ENCODE measurements at regions of chrX and their contacts with region 1.

Region 1: GRCh38 chrX:46903458-46904242 is 8.6 kb upstream of the JADE3 start:
- DNase-seq: peak; percentile 40 to 54 (median 49)
- H3K4me3 ChIP-seq: no peak overlapping the region
- H3K4me3 Mint-ChIP-seq: peak overlapping the region in 7 of 8 donors; percentile 15 to 74 (median 54)
- H3K27ac ChIP-seq: no peak overlapping the region
- H3K27ac Mint-ChIP-seq: peak overlapping the region in 1 of 7 donors; percentile 53
- H3K4me1 ChIP-seq: peaks cover 3% of the 10 kb centered on the region
- H3K4me1 Mint-ChIP-seq: no peaks in the 10 kb centered on the region
- H3K27me3 ChIP-seq: no peaks in the 10 kb centered on the region
- H3K27me3 Mint-ChIP-seq: no peaks in the 10 kb centered on the region

Region 2: GRCh38 chrX:45007598-45007997 is 1896.1 kb before region 1 on chrX:
- CTCF ChIA-PET with region 1: no interaction called
- POLR2A ChIA-PET with region 1: no interaction called
- intact Hi-C with region 1: no loop called
- DNase-seq: no peak
- H3K4me3 ChIP-seq: no peak overlapping the region
- H3K4me3 Mint-ChIP-seq: peak overlapping the region in 4 of 8 donors; percentile 47 to 54 (median 50)
- H3K27ac ChIP-seq: no peak overlapping the region
- H3K27ac Mint-ChIP-seq: peak overlapping the region in 3 of 7 donors; percentile 30 to 62 (median 53)
- H3K4me1 ChIP-seq: peaks cover 7% of the 10 kb centered on the region
- H3K4me1 Mint-ChIP-seq: peaks cover 18 to 71% (median 38%) of the 10 kb centered on the region in 4 donors
- H3K27me3 ChIP-seq: no peaks in the 10 kb centered on the region
- H3K27me3 Mint-ChIP-seq: no peaks in the 10 kb centered on the region

Region 3: DNA sequence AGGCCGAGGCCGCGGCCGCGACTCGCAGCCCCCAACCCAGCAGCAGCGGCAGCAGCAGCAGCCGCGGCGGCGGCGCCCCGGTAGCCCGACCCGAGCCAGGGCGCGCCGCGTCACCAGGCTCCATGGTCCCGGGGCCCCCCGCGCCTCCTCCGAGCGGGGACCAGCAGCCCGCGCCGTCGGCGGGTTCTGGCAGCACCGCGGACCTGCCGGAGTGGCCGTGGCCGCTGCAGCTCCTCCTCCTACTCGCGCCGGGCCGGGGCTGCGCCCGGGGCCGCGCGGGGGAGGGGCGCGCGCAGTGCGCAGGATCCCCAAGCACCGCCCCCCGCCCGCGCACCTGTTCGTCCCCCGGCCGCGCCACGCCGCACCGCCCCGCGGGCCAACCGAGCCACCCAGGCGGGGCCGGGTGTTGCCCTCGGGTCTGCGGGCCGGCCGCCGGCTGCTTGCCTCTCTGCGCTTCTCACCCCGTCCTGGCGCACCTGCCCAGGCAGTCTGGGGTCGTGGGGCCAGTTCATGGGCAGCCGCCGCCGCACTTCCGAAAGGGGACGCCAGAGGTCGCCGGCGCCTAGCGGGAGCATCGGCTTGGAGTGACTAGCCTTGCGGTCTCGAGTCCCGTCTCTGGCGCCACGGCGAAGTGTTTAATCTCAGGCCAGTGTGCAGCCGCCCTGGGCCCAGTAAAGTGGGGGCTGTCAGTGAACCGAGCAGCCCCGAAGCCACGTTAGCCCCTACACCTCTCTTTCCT is 144.6 kb before region 1 on chrX and contains the start of gene SLC9A7:
- CTCF ChIA-PET with region 1: no interaction called
- POLR2A ChIA-PET with region 1: no interaction called
- intact Hi-C with region 1: loop called (anchors 5 kb)
- DNase-seq: peak; percentile 71 to 80 (median 74)
- H3K4me3 ChIP-seq: peak within 1 kb of the TSS; percentile 17 to 56
- H3K4me3 Mint-ChIP-seq: peak within 1 kb of the TSS; percentile 84 to 93 (median 92)
- H3K27ac ChIP-seq: no peak within 1 kb of the TSS
- H3K27ac Mint-ChIP-seq: peak within 1 kb of the TSS; percentile 57 to 94 (median 78)
- H3K4me1 ChIP-seq: peaks cover 6% of the 10 kb centered on the region
- H3K4me1 Mint-ChIP-seq: peaks cover 5 to 21% (median 11%) of the 10 kb centered on the region in 4 donors
- H3K27me3 ChIP-seq: no peaks in the 10 kb centered on the region
- H3K27me3 Mint-ChIP-seq: no peaks in the 10 kb centered on the region
- total RNA-seq, gene SLC9A7: 2.8 to 3.5 TPM

Region 4: DNA sequence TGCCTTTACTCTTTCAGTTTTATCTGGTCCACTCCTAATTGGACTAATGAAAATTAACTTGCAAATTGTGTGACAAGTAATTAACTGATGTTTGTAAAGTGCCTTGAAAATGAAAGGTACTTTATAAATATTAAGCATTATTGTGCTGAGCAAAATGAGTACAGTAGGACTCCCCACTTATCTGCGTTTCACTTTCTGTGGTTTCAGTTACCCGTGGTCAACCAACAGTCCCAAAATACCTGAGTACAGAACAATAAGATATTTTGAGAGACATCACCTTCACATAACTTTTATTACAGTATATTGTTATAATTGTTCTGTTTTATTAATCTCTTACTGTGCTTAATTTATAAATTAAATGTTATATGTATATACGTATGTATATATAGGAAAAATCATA is 18.9 kb before region 1 on chrX:
- CTCF ChIA-PET with region 1: no interaction called
- POLR2A ChIA-PET with region 1: no interaction called
- intact Hi-C with region 1: no loop called
- DNase-seq: no peak
- H3K4me3 ChIP-seq: no peak overlapping the region
- H3K4me3 Mint-ChIP-seq: no peak overlapping the region
- H3K27ac ChIP-seq: no peak overlapping the region
- H3K27ac Mint-ChIP-seq: no peak overlapping the region
- H3K4me1 ChIP-seq: no peaks in the 10 kb centered on the region
- H3K4me1 Mint-ChIP-seq: no peaks in the 10 kb centered on the region
- H3K27me3 ChIP-seq: no peaks in the 10 kb centered on the region
- H3K27me3 Mint-ChIP-seq: no peaks in the 10 kb centered on the region

Region 5: DNA sequence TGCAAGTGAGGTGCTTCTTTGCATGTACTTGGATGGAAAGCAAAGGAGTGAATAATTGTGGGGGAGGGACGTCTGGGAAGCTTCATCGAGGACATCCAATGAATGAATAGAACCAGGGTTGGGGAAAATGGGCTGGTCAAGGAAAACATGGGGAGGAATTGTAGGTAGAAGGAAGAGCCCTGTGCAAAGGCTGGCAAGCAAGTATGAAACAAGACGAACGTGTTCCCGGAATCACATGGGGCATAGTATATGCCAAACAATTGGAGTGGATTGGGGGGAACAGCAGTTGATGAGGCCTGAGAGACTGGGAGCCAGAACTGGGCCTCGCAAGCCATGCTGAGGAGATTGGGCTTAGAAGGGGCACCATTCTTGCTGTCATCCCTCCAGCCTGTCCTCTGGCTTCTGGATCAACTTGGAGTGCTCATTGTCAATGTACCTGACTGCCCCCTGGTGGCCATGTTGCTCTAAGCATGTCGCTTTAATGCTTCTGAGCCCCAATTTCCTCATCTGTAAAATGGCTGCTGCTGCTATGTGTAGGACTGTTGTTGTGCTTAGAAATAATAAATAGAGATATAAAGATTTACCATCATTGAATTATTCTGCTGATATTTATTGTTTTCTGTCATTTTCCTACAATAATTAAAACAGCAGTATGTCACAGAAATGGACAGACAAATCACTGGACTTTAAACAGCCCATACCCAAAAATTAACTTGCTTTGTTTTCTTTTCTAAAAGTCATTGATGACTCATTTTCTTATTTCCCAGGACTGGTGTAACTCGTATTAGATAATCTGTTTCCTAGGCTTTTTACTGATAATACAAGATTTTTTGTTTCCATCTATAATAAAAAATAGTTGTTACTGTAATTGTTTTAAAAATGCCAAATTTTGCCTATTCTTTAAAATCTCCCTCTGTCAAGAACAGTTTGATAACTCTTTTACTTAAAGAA is 75.0 kb after region 1 on chrX:
- CTCF ChIA-PET with region 1: interaction called, 10 read pairs
- POLR2A ChIA-PET with region 1: no interaction called
- intact Hi-C with region 1: loop called (anchors 1 kb)
- DNase-seq: peak; percentile 52 to 59 (median 54)
- H3K4me3 ChIP-seq: no peak overlapping the region
- H3K4me3 Mint-ChIP-seq: no peak overlapping the region
- H3K27ac ChIP-seq: no peak overlapping the region
- H3K27ac Mint-ChIP-seq: no peak overlapping the region
- H3K4me1 ChIP-seq: no peaks in the 10 kb centered on the region
- H3K4me1 Mint-ChIP-seq: no peaks in the 10 kb centered on the region
- H3K27me3 ChIP-seq: no peaks in the 10 kb centered on the region
- H3K27me3 Mint-ChIP-seq: no peaks in the 10 kb centered on the region

Region 6: GRCh38 chrX:47030339-47030738 is 126.7 kb after region 1 on chrX:
- CTCF ChIA-PET with region 1: interaction called, 6 read pairs
- POLR2A ChIA-PET with region 1: no interaction called
- intact Hi-C with region 1: loop called (anchors 1 kb)
- DNase-seq: peak in 4 of 5 donors; percentile 12 to 39 (median 32)
- H3K4me3 ChIP-seq: no peak overlapping the region
- H3K4me3 Mint-ChIP-seq: no peak overlapping the region
- H3K27ac ChIP-seq: no peak overlapping the region
- H3K27ac Mint-ChIP-seq: no peak overlapping the region
- H3K4me1 ChIP-seq: no peaks in the 10 kb centered on the region
- H3K4me1 Mint-ChIP-seq: no peaks in the 10 kb centered on the region
- H3K27me3 ChIP-seq: no peaks in the 10 kb centered on the region
- H3K27me3 Mint-ChIP-seq: no peaks in the 10 kb centered on the region

Region 7: GRCh38 chrX:47093248-47093647 is 189.6 kb after region 1 on chrX:
- CTCF ChIA-PET with region 1: interaction called, 5 read pairs
- POLR2A ChIA-PET with region 1: no interaction called
- intact Hi-C with region 1: loop called (anchors 2 kb)
- DNase-seq: peak in 2 of 5 donors; percentile 8 to 12
- H3K4me3 ChIP-seq: no peak overlapping the region
- H3K4me3 Mint-ChIP-seq: no peak overlapping the region
- H3K27ac ChIP-seq: no peak overlapping the region
- H3K27ac Mint-ChIP-seq: no peak overlapping the region
- H3K4me1 ChIP-seq: no peaks in the 10 kb centered on the region
- H3K4me1 Mint-ChIP-seq: peaks cover 4 to 16% (median 10%) of the 10 kb centered on the region in 4 donors
- H3K27me3 ChIP-seq: no peaks in the 10 kb centered on the region
- H3K27me3 Mint-ChIP-seq: no peaks in the 10 kb centered on the region

Measured in CD4-positive, alpha-beta memory T cell (primary cell).